ENCODE measurements at regions of chr19 and their contacts with region 1.

Region 1: GRCh38 chr19:41859618-41860418 is at the start of gene RPS19:
- DNase-seq: peak; percentile 93 to 99 (median 95)
- ATAC-seq: peak; percentile 93
- H3K4me3 ChIP-seq: peak within 1 kb of the TSS; percentile 93
- H3K27ac ChIP-seq: peak within 1 kb of the TSS; percentile 99
- H3K4me1 ChIP-seq: peaks cover 25 to 30% of the 10 kb centered on the region in 2 experiments
- H3K27me3 ChIP-seq: no peaks in the 10 kb centered on the region
- CTCF ChIP-seq: peak; percentile 71 to 82 (median 76)
- EP300 ChIP-seq: peak; percentile 40
- POLR2A ChIP-seq: peak; percentile 97
- RAD21 ChIP-seq: 0 out of 4 replicates have a peak, but pooled peaks of 1 of the 2 experiments have one; percentile 1
- polyA plus RNA-seq, gene RPS19: 3,130 to 3,408 TPM

Region 2: GRCh38 chr19:41837981-41838708 is 21.7 kb before region 1 on chr19:
- CTCF ChIA-PET with region 1: no interaction called
- POLR2A ChIA-PET with region 1: interaction called, 23 read pairs
- in situ Hi-C with region 1: no loop called
- intact Hi-C with region 1: loop called (anchors 2 kb)
- DNase-seq: peak in 2 of 4 experiments; percentile 4 to 30
- ATAC-seq: peak; percentile 34
- H3K4me3 ChIP-seq: no peak overlapping the region
- H3K27ac ChIP-seq: no peak overlapping the region
- H3K4me1 ChIP-seq: peaks cover 14 to 24% of the 10 kb centered on the region in 2 experiments; a peak in 3 of 5 replicates
- H3K27me3 ChIP-seq: peaks cover 0 to 13% of the 10 kb centered on the region in 2 experiments; a peak in 4 of 5 replicates
- CTCF ChIP-seq: no peak
- EP300 ChIP-seq: no peak
- POLR2A ChIP-seq: no peak
- RAD21 ChIP-seq: no peak

Region 3: DNA sequence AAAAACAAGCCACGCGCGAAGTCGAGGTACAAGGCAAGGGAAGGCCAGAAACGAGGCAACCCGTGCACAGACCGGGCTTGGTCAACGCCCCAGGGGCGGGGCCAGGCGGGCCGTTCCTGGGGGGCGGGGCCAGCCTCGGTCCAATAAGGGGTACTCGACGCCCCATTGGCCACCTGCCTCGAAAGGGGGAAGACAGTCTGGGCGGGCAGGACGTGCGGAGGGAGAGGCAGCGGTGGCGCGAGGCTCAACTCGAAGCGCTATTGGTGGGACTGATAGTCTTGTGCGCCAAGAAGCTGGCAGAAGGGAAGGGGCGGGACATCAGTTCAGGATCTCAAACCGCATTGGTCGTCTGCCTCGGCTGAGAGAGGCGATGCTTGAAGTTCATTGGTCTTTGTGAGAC is 15.2 kb before region 1 on chr19 and contains the start of gene LYPD4:
- CTCF ChIA-PET with region 1: no interaction called
- POLR2A ChIA-PET with region 1: interaction called, 23 read pairs
- in situ Hi-C with region 1: no loop called
- intact Hi-C with region 1: loop called (anchors 2 kb)
- DNase-seq: peak in 3 of 4 experiments; percentile 51 to 65 (median 55)
- ATAC-seq: peak; percentile 69
- H3K4me3 ChIP-seq: no peak within 1 kb of the TSS
- H3K27ac ChIP-seq: no peak within 1 kb of the TSS
- H3K4me1 ChIP-seq: peaks cover 22 to 31% of the 10 kb centered on the region in 2 experiments; a peak in 4 of 5 replicates
- H3K27me3 ChIP-seq: no peaks in the 10 kb centered on the region
- CTCF ChIP-seq: no peak
- EP300 ChIP-seq: no peak
- POLR2A ChIP-seq: no peak
- RAD21 ChIP-seq: no peak
- polyA plus RNA-seq, gene LYPD4: 0.11 TPM in 1 of 2 experiments, not detected in the other